ENCODE measurements at regions of chr7 and their contacts with region 1.

Region 1: DNA sequence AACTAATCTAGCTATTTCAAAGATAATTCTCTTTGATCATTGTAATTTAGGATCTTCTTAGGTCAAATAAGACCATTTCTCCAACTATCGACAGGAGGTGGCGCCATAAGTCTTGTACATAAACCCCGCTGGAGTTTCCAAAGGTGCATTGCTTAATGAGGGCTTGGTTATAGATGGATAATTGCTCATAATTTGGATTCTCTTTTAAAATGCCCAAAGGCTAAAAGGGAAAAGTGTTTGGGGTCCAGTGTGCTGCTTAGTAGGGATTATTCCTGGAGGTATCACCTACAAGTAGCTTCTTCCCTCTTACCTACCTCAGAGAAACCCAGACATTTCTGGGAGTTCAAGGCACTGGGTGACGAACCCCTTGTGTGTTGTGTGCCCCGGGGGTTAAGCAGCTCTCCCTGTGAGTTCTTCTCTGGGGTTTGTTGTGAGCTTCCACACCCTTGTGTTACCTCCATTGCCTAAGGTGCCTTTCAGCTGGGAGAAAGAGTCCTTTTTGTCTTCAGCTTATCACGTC is 75.2 kb downstream of the PAXIP1 start:
- DNase-seq: peak; percentile 89
- ATAC-seq: peak; percentile 62
- H3K4me3 Mint-ChIP-seq: peak overlapping the region; percentile 94
- H3K27ac Mint-ChIP-seq: peak overlapping the region; percentile 86
- H3K4me1 Mint-ChIP-seq: peaks cover 12% of the 10 kb centered on the region
- H3K27me3 Mint-ChIP-seq: peaks cover 19% of the 10 kb centered on the region

Region 2: GRCh38 chr7:154372011-154372601 is 555.6 kb before region 1 on chr7:
- CTCF ChIA-PET with region 1: no interaction called
- DNase-seq: no peak
- ATAC-seq: no peak
- H3K4me3 Mint-ChIP-seq: no peak overlapping the region
- H3K27ac Mint-ChIP-seq: no peak overlapping the region
- H3K4me1 Mint-ChIP-seq: no peaks in the 10 kb centered on the region
- H3K27me3 Mint-ChIP-seq: no peaks in the 10 kb centered on the region

Region 3: GRCh38 chr7:154817224-154817896 is 110.3 kb before region 1 on chr7:
- CTCF ChIA-PET with region 1: no interaction called
- DNase-seq: no peak
- ATAC-seq: no peak
- H3K4me3 Mint-ChIP-seq: no peak overlapping the region
- H3K27ac Mint-ChIP-seq: no peak overlapping the region
- H3K4me1 Mint-ChIP-seq: no peaks in the 10 kb centered on the region
- H3K27me3 Mint-ChIP-seq: no peaks in the 10 kb centered on the region

Region 4: GRCh38 chr7:154841731-154842331 is 85.9 kb before region 1 on chr7:
- CTCF ChIA-PET with region 1: no interaction called
- DNase-seq: no peak
- ATAC-seq: no peak
- H3K4me3 Mint-ChIP-seq: no peak overlapping the region
- H3K27ac Mint-ChIP-seq: no peak overlapping the region
- H3K4me1 Mint-ChIP-seq: no peaks in the 10 kb centered on the region
- H3K27me3 Mint-ChIP-seq: peaks cover 26% of the 10 kb centered on the region

Region 5: DNA sequence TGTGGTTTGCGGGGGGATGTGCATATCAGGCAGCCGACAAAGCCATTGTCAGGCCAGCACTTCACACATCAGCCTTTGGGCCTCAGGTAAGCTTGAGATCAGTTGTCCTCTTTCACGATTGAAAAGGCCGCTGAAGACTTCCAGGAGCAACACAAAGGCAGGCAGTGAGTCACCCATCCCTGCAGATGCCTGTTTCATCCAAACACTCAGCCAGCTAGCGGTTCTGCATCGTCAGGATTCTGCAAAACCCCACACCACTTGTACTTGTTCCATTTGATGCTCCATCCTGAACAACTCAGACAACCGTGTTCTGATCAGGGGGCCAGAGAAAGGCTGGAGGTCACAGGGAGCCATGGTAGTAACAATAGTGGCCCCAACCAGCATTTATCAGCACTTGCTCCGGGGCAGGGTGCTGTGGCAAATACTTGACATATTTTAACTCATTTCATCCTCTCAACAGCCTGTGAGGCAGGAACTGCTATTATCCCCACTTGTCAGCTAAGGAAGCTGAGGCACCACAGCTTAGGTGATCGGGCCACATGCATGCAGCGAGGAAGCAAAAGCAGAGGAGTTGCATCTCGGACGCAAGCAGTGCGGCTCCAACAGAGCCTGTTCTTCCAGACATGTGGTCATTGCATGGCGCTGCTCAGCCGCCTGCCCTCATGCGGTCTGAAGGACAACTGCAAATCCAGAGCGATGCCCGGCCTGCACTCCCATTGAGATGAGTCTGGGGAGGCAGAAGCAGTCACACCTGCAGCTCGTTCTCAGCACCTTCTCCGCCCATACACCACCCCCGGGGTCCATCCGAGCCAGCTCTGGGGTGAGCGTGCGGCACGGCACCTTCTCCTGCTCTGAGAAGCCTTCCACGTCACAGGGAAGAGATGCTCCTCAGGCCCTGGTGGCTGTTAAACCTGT is 69.7 kb before region 1 on chr7:
- CTCF ChIA-PET with region 1: no interaction called
- DNase-seq: no peak
- ATAC-seq: no peak
- H3K4me3 Mint-ChIP-seq: no peak overlapping the region
- H3K27ac Mint-ChIP-seq: no peak overlapping the region
- H3K4me1 Mint-ChIP-seq: no peaks in the 10 kb centered on the region
- H3K27me3 Mint-ChIP-seq: peaks cover 6% of the 10 kb centered on the region

Region 6: DNA sequence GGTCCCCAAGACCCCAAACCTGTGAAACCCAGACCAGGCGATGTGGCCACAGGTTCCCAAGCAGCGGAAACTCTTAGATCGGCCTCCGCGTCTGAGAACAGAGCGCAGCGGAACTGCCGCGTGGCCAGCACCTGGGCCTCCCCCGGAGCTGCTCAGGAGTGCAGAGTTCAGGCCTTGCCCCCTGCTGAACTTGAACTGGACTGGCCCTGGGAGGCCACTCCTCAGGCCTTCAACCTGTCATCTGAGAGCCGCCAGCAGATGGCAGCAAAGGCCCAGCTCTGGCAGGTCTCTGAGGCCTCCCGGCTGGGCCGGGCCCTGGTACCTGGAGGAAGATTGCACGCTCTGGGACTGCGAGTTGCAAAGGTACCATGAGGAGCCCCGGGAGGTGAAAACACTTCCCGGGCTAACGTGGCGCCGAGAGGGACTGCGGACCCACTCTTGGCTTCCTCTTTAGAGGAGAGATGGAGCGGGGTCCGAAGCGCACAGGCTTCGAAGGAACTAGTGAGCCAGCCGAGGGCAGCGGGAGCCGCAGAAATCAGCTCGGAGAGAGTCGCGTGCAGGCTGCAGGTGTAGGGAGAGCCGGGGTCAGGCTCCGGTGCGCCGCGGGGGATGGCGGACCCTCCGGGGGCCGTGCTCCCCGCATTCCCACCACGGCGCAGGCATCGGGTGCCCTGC is 13.9 kb before region 1 on chr7:
- CTCF ChIA-PET with region 1: interaction called, 41 read pairs
- DNase-seq: peak; percentile 89
- ATAC-seq: peak; percentile 99
- H3K4me3 Mint-ChIP-seq: peak overlapping the region; percentile 36
- H3K27ac Mint-ChIP-seq: no peak overlapping the region
- H3K4me1 Mint-ChIP-seq: peaks cover 4% of the 10 kb centered on the region
- H3K27me3 Mint-ChIP-seq: peaks cover 15% of the 10 kb centered on the region

Region 7: DNA sequence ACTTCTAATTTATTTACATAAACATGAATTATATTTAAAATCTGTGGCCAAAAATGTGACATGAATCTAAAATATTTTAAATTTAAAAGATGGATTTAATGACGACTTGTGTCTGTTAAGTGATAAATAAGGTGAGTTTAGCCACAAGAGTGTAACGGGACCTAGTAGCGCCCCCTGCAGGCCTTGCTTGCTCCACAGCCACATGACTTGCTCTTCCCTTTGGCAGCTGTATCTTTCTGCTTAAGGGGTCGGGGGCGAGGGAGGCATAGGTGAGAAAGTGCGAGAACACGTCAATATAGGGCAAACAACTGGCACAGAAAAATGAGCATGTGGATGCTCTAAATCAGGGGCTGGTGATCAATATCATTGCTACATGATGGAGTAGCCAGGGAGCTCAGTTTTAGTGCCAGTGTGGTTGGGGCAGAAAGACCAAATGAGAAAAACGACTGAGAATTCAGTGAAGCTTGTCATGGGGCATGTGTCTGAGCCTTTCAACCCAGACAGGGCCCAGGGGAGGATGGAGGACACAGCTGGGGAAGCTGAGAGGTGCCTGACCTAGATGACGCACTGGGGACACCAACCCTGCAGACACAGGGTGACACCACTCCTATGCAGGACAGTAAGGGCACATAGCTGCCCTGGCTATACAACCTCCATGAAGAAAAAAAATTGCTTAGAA is 25.5 kb after region 1 on chr7:
- CTCF ChIA-PET with region 1: interaction called, 31 read pairs
- DNase-seq: peak; percentile 64
- ATAC-seq: no peak
- H3K4me3 Mint-ChIP-seq: no peak overlapping the region
- H3K27ac Mint-ChIP-seq: no peak overlapping the region
- H3K4me1 Mint-ChIP-seq: no peaks in the 10 kb centered on the region
- H3K27me3 Mint-ChIP-seq: no peaks in the 10 kb centered on the region

Region 8: DNA sequence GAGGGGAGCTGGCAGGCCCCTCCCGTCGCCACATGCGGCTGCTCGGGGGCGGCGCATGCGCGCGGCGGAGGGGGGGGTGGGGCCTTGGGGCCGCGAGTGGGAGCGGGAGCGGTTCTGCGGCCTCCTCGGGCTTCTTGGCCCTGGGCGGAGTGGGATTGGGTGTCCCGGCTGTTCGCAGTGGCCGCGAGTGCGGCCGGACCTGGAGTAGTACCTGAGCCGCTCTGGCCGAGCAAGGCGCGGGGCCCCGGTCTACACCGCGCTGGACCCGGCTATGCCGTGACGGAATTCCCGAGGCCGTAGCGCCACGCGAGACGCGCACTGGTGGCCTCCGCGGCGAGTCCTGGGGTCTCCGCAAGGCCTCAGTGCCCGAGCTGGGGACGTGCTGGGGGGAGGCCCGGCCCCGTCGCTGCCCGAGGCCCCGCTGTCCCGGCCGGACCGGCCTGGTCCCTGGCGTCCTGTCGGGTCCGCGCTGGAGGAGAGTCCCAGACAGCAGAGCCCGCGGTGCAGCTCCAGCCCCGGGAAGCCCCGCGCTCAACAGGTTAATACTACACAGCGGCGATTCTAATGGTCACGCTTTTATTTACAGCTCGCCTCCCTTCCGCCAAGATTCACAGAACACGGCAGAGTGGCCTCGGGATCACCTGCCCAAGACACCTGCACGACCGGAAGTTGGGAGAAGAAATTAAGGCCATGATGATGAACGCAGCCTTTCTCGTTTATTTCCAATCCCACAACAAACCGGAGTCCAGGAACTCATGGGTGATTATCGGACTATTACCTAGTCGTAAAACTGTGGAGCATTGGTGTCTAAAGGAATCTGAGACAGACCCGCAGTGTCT is 75.9 kb after region 1 on chr7:
- CTCF ChIA-PET with region 1: interaction called, 20 read pairs
- DNase-seq: peak; percentile 88
- ATAC-seq: peak; percentile 82
- H3K4me3 Mint-ChIP-seq: peak overlapping the region; percentile 95
- H3K27ac Mint-ChIP-seq: peak overlapping the region; percentile 91
- H3K4me1 Mint-ChIP-seq: peaks cover 13% of the 10 kb centered on the region
- H3K27me3 Mint-ChIP-seq: no peaks in the 10 kb centered on the region

Region 9: GRCh38 chr7:155205368-155206317 is 278.0 kb after region 1 on chr7:
- CTCF ChIA-PET with region 1: interaction called, 16 read pairs
- DNase-seq: peak; percentile 97
- ATAC-seq: peak; percentile 91
- H3K4me3 Mint-ChIP-seq: peak overlapping the region; percentile 86
- H3K27ac Mint-ChIP-seq: peak overlapping the region; percentile 99
- H3K4me1 Mint-ChIP-seq: peaks cover 35% of the 10 kb centered on the region
- H3K27me3 Mint-ChIP-seq: no peaks in the 10 kb centered on the region

Region 10: GRCh38 chr7:155344600-155345433 is 417.1 kb after region 1 on chr7:
- CTCF ChIA-PET with region 1: interaction called, 43 read pairs
- DNase-seq: peak; percentile 84
- ATAC-seq: peak; percentile 98
- H3K4me3 Mint-ChIP-seq: peak overlapping the region; percentile 14
- H3K27ac Mint-ChIP-seq: no peak overlapping the region
- H3K4me1 Mint-ChIP-seq: peaks cover 4% of the 10 kb centered on the region
- H3K27me3 Mint-ChIP-seq: peaks cover 25% of the 10 kb centered on the region

Region 11: DNA sequence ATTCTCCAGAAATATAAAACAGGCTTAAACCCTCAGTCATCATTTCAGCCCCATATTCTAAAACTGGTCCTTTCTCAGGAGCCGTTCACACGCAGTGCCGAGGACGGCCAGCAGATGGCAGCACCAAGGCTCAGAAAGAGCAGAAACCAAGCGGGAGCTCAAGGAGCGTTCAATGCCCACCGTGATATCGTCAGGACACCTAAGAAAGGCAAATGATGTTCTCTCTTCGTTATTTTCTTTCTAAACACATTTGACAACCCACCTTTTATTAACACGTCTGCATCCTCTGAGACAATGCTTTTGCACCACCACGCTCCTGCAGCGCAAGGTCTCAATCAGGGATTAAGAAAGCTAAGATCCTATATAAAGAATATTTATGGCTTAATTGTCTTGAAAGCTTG is 671.1 kb after region 1 on chr7:
- CTCF ChIA-PET with region 1: interaction called, 10 read pairs
- DNase-seq: peak; percentile 87
- ATAC-seq: peak; percentile 88
- H3K4me3 Mint-ChIP-seq: no peak overlapping the region
- H3K27ac Mint-ChIP-seq: no peak overlapping the region
- H3K4me1 Mint-ChIP-seq: peaks cover 7% of the 10 kb centered on the region
- H3K27me3 Mint-ChIP-seq: peaks cover 58% of the 10 kb centered on the region